AG04449 (cell line): ENCODE measurements at regions of chr19 and their contacts with region 1.

Region 1: GRCh38 chr19:43754503-43755255 is at the start of gene SMG9:
- DNase-seq: no peak
- H3K4me3 ChIP-seq: peak within 1 kb of the TSS; percentile 90
- CTCF ChIP-seq: no peak

Region 2: DNA sequence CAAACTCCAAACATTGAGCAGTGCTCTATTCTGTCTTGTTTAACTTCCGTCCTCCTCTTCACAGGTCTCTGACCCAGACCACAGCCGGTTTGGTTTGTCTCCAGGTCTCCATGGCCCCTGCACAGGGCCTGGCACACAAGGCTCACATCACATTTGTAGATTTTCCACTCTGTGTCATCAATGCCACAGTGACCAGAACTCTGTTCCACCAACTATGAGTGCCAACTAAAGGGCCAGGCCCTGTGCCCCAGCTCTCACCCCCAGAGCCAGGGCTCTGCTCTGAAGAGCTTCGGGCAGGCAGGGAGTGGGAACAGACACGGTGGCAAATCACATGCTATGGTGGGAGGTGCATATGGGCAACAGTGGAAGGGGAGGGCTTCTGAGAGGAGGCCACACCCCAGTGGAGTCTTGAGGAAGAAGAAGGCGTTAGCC is 15.9 kb before region 1 on chr19:
- CTCF ChIA-PET with region 1: interaction called, 203 read pairs
- POLR2A ChIA-PET with region 1: interaction called, 6 read pairs
- DNase-seq: no peak
- H3K4me3 ChIP-seq: no peak overlapping the region
- CTCF ChIP-seq: no peak

Region 3: DNA sequence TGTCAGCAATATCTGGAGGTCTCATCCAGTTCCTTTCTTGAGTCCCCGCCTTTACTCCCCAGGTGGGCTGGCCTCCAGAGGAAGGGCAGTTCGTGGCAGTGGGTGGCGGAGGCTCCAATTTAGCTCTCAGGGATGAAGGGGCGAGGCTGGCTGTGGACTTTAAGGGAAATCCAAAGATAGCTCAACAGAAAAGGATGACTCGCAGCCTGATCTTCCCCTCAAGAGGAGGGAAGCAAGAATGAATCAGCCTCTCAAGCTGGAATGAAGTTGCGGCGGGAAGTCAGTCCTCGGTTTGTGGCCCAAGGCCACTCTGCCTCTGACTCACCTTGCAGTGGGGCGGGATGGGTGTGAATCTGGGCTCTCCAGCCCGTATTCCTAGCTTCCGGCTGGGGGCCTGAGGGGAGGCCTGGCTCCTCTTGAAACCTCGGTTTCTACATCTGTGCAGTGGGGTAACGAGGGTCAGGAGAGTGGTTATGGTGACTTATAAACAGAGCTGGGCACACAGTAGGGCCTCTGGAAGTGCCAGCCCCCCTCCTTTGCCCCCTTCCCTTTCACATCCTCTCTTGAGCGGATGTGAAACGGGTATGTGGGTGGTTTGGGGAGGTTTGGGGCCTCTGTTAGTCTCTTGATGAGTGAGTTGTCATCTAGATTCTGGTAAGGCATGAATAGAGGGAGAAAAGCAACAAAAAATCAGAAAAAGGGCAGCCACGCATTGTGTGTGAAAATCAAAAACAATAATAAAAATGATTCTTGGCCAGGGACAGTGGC is 10.6 kb after region 1 on chr19:
- CTCF ChIA-PET with region 1: interaction called, 42 read pairs
- POLR2A ChIA-PET with region 1: interaction called, 5 read pairs
- DNase-seq: peak; percentile 87
- H3K4me3 ChIP-seq: no peak overlapping the region
- CTCF ChIP-seq: no peak

Region 4: DNA sequence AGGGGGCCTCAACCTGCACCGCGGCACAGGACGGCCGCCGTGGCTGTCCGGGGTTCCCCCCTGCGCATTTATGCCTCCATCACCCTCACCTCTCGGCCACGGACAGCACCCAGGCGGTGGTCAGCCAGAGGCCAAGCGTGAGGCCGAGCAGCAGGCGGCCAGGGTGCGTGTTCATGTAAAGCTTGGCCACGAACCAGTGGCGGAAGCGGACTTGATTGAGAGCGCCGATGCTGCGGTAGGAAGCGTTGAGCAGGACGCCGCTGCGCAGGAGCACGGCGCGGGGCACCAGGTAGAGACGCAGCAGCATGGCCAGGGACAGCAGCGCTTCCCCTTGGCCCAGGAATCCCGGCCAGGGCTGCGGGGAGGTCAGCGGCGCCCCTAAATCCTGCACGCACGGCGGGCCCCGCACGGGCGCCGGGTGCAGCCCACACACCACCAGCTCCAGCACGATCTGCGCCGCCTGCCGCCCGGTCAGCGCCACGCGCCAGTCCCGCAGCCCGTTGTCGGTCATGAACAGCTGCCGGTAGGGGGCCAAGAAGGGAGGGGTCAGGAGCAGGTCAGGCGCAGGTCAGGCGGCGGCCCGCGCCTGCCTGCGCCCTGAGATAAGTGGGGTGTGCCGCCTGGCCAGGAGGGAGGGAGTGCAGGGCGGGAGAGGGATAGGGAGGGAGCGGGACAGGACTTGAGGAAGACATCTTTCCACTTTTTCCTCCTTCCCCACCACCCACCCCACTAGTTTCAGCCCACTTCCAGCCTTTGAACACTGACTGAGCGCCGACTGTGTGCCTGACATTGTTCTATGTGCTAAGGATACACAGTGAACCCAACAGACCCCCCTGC is 19.6 kb after region 1 on chr19:
- CTCF ChIA-PET with region 1: interaction called, 42 read pairs
- POLR2A ChIA-PET with region 1: interaction called, 4 read pairs
- DNase-seq: no peak
- H3K4me3 ChIP-seq: peak overlapping the region; percentile 32
- CTCF ChIP-seq: peak; percentile 61

Region 5: DNA sequence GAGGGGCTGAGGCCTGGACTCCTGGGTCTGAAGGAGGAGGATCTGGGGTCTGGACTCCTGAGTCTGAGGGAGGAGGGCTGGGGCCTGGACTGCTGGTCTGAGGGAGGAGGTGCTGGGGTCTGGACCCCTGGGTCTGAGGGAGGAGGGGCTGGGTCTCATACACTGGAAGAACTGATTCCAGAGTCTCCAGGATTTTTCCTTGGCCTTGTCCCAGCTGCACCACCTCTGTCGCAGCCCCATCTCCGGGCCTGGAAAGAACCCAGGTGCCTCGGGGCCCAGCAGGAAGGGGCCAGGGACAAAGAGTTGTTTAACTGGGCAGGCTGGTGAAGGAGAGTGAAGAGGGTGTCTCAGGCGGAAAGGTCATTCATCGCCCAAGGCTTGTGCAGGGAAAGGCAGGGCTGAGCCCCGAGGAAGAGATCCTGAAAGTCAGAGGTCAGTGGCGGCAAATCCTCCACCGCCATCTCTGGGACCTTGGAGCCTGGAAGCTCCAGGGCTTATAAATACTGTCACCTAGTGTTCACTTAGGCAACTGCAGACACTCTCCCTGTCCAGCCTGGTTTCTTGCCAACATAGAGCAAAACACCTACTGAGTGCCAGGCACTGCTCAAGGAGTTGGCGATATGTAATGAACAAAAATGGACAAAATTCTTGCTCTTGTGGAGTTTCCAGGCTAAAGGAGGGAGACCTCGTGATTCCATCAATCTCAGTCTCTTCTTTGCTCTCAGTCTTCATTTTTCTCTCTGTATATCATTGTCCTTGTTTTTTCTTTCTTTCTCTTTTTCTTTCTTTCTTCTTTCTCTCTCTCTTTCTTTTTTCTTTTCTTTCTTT is 30.5 kb after region 1 on chr19:
- CTCF ChIA-PET with region 1: interaction called, 11 read pairs
- POLR2A ChIA-PET with region 1: interaction called, 3 read pairs
- DNase-seq: no peak
- H3K4me3 ChIP-seq: no peak overlapping the region; the same call in 1 of the 2 replicates
- CTCF ChIP-seq: peak; percentile 91

Region 6: DNA sequence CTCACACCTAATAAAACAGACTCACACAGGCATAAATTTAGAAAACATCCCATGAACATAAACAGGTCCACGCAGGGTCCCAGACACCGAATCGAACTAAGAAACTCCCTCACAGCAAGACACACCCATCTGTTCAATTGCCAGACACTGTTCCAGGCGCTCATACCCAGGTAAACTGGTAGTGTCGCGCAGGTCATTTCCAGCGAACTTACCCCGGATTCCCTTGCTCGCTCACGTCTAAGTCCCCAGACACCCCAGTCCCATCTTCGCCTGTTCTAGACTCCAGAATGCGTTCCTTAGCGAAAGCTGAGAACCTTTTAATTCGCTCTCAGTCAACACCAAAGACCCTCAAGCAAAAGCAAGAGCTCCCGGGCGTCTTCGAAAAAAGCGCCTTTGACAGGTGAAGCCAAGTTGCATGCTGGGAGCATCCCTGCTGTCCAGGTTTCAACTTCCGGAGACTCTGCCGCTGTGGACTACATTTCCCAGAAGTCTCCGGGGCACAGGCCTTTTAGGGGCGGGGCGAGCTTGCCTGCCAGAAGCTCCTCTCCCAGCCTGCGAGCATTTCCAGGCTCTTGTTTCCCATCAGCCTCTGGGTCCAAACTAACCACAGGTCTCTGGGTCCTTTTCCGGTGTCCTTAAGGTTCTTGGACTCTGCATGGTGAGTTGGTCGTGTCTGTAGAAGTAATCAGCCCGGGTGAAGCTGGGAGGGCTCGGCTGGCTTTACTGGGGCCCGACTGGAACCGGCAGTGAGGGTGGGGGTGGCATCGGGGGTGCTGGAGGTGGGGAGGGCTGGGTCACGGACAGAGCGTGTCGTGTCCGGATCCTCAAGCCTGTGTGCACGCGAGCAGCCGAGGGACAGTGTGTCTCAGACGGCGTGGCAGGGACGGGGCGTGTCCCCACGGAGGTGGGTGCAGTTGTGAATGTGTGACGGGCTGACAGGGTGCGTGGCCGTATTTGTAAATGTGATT is 72.4 kb after region 1 on chr19 and contains the start of gene ZNF283:
- CTCF ChIA-PET with region 1: no interaction called
- POLR2A ChIA-PET with region 1: no interaction called
- DNase-seq: peak; percentile 37
- H3K4me3 ChIP-seq: peak within 1 kb of the TSS; percentile 77
- CTCF ChIP-seq: no peak